ENCODE measurements at regions of chr21 and their contacts with region 1.

Region 1: GRCh38 chr21:38993561-38993960 is 187.8 kb downstream of the ETS2 start:
- DNase-seq: peak; percentile 93
- H3K4me3 ChIP-seq: peak overlapping the region in 1 of 3 experiments; percentile 51
- H3K27ac ChIP-seq: peak overlapping the region; percentile 94
- H3K4me1 ChIP-seq: peaks cover 58% of the 10 kb centered on the region
- H3K27me3 ChIP-seq: no peaks in the 10 kb centered on the region
- CTCF ChIP-seq: no peak
- POLR2A ChIP-seq: no peak

Region 2: GRCh38 chr21:38494703-38495102 is 498.9 kb before region 1 on chr21:
- CTCF ChIA-PET with region 1: no interaction called
- POLR2A ChIA-PET with region 1: no interaction called
- dilution Hi-C with region 1: no loop called
- intact Hi-C with region 1: loop called (anchors 2 kb)
- DNase-seq: peak; percentile 88
- H3K4me3 ChIP-seq: peak overlapping the region; percentile 84 to 100 (median 99)
- H3K27ac ChIP-seq: peak overlapping the region; percentile 100
- H3K4me1 ChIP-seq: peaks cover 63% of the 10 kb centered on the region
- H3K27me3 ChIP-seq: no peaks in the 10 kb centered on the region
- CTCF ChIP-seq: no peak
- POLR2A ChIP-seq: peak; percentile 86

Region 3: DNA sequence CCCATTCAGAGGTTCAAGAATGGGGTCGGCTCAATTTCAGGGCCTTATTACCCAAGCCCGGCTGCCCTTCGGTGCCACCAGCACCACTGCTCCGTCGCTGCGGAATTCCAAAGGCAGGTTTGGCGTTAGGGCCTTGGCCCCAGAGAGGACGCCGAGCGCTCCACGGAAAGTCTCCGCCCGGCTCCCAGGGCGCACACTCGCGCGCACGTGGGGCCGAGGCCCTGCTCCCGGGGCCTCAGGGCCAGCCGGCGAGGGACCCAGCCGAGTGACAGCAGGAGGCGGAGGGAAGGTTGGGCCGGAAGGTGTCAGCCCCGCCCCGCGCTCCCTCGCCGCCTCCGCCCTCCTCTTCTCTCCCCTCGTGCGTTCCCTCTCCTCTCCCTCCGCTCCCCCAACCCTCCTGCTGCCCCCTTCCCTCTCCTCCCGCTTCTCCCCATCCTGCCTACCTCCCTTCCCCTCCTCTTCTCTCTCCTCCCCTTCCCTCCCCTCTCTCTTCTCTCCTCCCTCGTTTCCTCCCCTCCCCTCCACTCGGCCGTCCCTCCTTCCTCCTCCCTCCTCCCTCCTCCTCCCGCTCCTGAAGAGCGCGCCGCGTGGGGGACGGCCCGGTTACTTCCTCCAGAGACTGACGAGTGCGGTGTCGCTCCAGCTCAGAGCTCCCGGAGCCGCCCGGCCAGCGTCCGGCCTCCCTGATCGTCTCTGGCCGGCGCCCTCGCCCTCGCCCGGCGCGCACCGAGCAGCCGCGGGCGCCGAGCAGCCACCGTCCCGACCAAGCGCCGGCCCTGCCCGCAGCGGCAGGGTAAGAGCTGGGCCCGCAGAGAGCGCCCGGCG is 188.0 kb before region 1 on chr21 and contains the start of gene ETS2:
- CTCF ChIA-PET with region 1: interaction called, 8 read pairs
- POLR2A ChIA-PET with region 1: no interaction called
- dilution Hi-C with region 1: no loop called
- intact Hi-C with region 1: loop called (anchors 1 kb)
- DNase-seq: peak; percentile 81
- H3K4me3 ChIP-seq: peak within 1 kb of the TSS; percentile 93 to 98 (median 97)
- H3K27ac ChIP-seq: peak within 1 kb of the TSS; percentile 74
- H3K4me1 ChIP-seq: peaks cover 35% of the 10 kb centered on the region
- H3K27me3 ChIP-seq: no peaks in the 10 kb centered on the region
- CTCF ChIP-seq: no peak
- POLR2A ChIP-seq: peak; percentile 85
- total RNA-seq, gene ETS2: 42.1 and 54.5 TPM in 2 replicates

Region 4: DNA sequence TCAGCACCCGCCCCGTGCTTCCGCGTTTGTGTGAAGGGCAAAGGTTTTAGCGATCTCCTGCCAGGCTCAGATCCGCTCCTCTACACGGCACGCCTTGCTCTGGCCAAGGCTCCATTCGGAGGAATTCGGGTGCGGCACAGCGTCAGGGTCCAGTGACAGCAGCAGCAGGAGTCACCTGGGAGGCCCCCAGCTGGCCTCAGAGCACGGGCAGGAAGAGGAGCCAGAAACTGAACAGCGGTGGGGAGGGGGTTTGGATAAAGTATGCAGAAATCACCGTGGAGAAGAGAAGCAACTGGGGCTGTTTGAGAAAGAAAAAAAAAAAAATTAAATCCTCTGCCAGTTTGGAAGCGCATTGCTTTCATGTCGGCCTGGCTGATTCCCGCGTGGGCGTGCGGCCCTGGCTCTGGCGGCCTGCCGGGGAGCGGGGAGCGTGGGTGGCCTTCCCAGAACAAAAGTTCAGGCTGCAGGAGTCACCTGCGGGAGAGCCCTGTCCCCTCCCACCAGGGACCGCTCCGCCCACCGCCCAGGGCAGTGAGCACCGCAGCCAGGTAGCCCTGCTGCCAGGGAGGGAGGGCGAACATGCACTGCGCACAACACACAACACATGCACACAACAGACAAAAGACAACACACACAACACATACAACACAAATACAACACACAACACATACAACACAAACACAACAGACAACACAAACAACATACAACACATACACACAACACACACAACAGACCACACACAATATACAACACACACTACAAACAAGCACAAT is 80.3 kb before region 1 on chr21:
- CTCF ChIA-PET with region 1: interaction called, 5 read pairs
- POLR2A ChIA-PET with region 1: no interaction called
- dilution Hi-C with region 1: no loop called
- intact Hi-C with region 1: loop called (anchors 5 kb)
- DNase-seq: peak; percentile 35
- H3K4me3 ChIP-seq: no peak overlapping the region
- H3K27ac ChIP-seq: no peak overlapping the region
- H3K4me1 ChIP-seq: peaks cover 3% of the 10 kb centered on the region
- H3K27me3 ChIP-seq: peaks cover 0 to 2% of the 10 kb centered on the region in 2 experiments
- CTCF ChIP-seq: no peak
- POLR2A ChIP-seq: no peak

Region 5: DNA sequence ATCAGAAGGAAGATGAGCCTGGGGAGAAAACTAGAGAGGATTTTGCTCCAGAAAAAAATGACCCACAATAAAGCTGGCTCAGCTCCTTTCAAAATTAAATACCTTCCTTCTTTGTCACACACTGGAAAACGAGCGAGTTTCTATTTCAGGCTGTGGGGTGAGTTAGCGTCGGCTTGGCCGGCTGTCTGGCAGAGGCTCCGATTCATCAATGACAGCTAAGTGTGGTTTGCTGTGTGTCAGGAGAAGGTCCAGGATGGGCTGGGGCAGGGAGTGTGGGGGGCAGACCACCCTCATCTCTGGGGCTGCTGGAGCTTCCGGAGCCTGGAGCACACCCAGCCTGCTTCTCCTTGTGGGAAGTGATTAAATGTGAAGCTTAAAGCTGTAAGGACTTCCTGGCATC is 67.6 kb before region 1 on chr21:
- CTCF ChIA-PET with region 1: no interaction called
- POLR2A ChIA-PET with region 1: no interaction called
- dilution Hi-C with region 1: no loop called
- intact Hi-C with region 1: no loop called
- DNase-seq: peak; percentile 33
- H3K4me3 ChIP-seq: peak overlapping the region in 1 of 3 experiments; percentile 1
- H3K27ac ChIP-seq: no peak overlapping the region
- H3K4me1 ChIP-seq: no peaks in the 10 kb centered on the region
- H3K27me3 ChIP-seq: peaks cover 0 to 3% of the 10 kb centered on the region in 2 experiments
- CTCF ChIP-seq: no peak
- POLR2A ChIP-seq: no peak

Region 6: GRCh38 chr21:39004634-39005501 is 11.3 kb after region 1 on chr21:
- CTCF ChIA-PET with region 1: interaction called, 4 read pairs
- POLR2A ChIA-PET with region 1: interaction called, 4 read pairs
- dilution Hi-C with region 1: no loop called
- intact Hi-C with region 1: loop called (anchors 1 kb)
- DNase-seq: peak; percentile 84
- H3K4me3 ChIP-seq: no peak overlapping the region
- H3K27ac ChIP-seq: peak overlapping the region; percentile 60
- H3K4me1 ChIP-seq: peaks cover 56% of the 10 kb centered on the region
- H3K27me3 ChIP-seq: no peaks in the 10 kb centered on the region
- CTCF ChIP-seq: no peak
- POLR2A ChIP-seq: no peak

Region 7: GRCh38 chr21:39066829-39067780 is 73.5 kb after region 1 on chr21:
- CTCF ChIA-PET with region 1: interaction called, 5 read pairs
- POLR2A ChIA-PET with region 1: no interaction called
- dilution Hi-C with region 1: no loop called
- intact Hi-C with region 1: loop called (anchors 2 kb)
- DNase-seq: peak; percentile 83
- H3K4me3 ChIP-seq: no peak overlapping the region
- H3K27ac ChIP-seq: peak overlapping the region; percentile 6
- H3K4me1 ChIP-seq: peaks cover 26% of the 10 kb centered on the region
- H3K27me3 ChIP-seq: peaks cover 0 to 4% of the 10 kb centered on the region in 2 experiments
- CTCF ChIP-seq: no peak
- POLR2A ChIP-seq: no peak

Measured in endothelial cell of umbilical vein (primary cell).